T-cell (primary cell): ENCODE measurements at regions of chr16 and their contacts with region 1.

Region 1: GRCh38 chr16:19068237-19068815 is 912 bp downstream of the COQ7 start:
- DNase-seq: peak in 1 of 35 experiments; percentile 17
- ATAC-seq: no peak
- H3K4me3 ChIP-seq: peak overlapping the region; percentile 90
- H3K4me3 Mint-ChIP-seq: peak overlapping the region; percentile 90 to 96 (median 92)
- H3K27ac ChIP-seq: peak overlapping the region; percentile 100
- H3K27ac Mint-ChIP-seq: peak overlapping the region; percentile 91 to 99
- H3K4me1 ChIP-seq: peaks cover 3 to 14% of the 10 kb centered on the region in 2 experiments
- H3K4me1 Mint-ChIP-seq: peaks cover 6 to 27% (median 20%) of the 10 kb centered on the region in 3 donors
- H3K27me3 ChIP-seq: no peaks in the 10 kb centered on the region
- H3K27me3 Mint-ChIP-seq: no peaks in the 10 kb centered on the region

Region 2: GRCh38 chr16:18959031-18959505 is 109.3 kb before region 1 on chr16:
- CTCF ChIA-PET with region 1: no interaction called
- POLR2A ChIA-PET with region 1: interaction called in 1 of 2 experiments, 15 read pairs
- DNase-seq: no peak
- ATAC-seq: no peak
- H3K4me3 ChIP-seq: no peak overlapping the region
- H3K4me3 Mint-ChIP-seq: no peak overlapping the region
- H3K27ac ChIP-seq: no peak overlapping the region
- H3K27ac Mint-ChIP-seq: no peak overlapping the region
- H3K4me1 ChIP-seq: no peaks in the 10 kb centered on the region
- H3K4me1 Mint-ChIP-seq: peaks cover 0 to 10% (median 7%) of the 10 kb centered on the region in 3 donors
- H3K27me3 ChIP-seq: peaks cover 0 to 2% of the 10 kb centered on the region in 2 experiments
- H3K27me3 Mint-ChIP-seq: no peaks in the 10 kb centered on the region